K562 (cell line): ENCODE measurements at regions of chr11 and their contacts with region 1.

Region 1: DNA sequence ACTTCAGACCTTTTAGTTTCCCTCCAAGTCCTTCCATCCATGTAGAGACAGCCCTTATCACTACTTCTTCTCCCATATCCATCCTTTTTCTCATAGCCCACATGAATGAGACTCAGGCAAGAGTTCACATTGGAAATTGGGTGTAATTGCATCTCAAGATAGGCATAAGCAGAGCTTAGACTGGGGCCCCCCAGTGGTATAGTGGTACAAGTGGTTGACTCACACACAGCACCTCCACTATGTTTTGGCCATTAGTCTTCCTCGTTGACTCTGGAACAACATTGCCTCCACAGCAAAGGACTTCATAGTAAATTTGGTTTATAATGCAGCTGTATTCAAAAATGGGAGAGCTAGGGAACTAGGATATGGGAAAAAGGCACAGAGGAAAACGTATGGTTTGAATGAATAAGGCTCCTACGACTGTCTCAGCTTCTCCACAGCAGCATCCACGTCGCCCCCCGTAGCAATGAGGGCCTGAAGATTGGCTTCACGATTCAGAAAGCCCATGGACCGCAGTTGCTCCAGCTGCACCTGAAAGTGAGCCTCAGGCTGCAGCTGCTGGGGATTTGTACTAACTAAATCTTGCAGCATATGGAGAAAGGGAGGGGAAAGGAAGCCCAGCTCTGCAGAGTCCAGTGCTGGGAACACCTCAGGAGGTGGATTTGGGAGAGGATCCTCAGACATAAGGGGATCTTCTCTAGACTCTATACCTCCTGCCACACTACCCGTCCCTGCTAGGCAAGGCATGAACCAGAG is 2.4 kb downstream of the UBQLN3 start:
- DNase-seq: peak; percentile 36 to 62 (median 48)
- ATAC-seq: peak; percentile 48
- H3K4me3 ChIP-seq: no peak overlapping the region
- H3K27ac ChIP-seq: no peak overlapping the region
- H3K4me1 ChIP-seq: peaks cover 24 to 49% of the 10 kb centered on the region in 2 experiments; a peak in 4 of 5 replicates
- H3K27me3 ChIP-seq: no peaks in the 10 kb centered on the region
- CTCF ChIP-seq: peak; percentile 52 to 62 (median 59); a peak in 5 of 6 replicates
- EP300 ChIP-seq: no peak
- POLR2A ChIP-seq: no peak
- RAD21 ChIP-seq: peak in 1 of 2 experiments; percentile 24; a peak in 1 of 4 replicates

Region 2: GRCh38 chr11:5476184-5476819 is 31.1 kb before region 1 on chr11:
- CTCF ChIA-PET with region 1: no interaction called
- POLR2A ChIA-PET with region 1: interaction called, 17 read pairs
- in situ Hi-C with region 1: no loop called
- intact Hi-C with region 1: no loop called
- DNase-seq: peak; percentile 69 to 77 (median 72)
- ATAC-seq: peak; percentile 97
- H3K4me3 ChIP-seq: no peak overlapping the region
- H3K27ac ChIP-seq: no peak overlapping the region; the same call in 2 of the 3 replicates
- H3K4me1 ChIP-seq: no peaks in the 10 kb centered on the region
- H3K27me3 ChIP-seq: no peaks in the 10 kb centered on the region
- CTCF ChIP-seq: peak; percentile 65 to 82 (median 79)
- EP300 ChIP-seq: no peak
- POLR2A ChIP-seq: no peak
- RAD21 ChIP-seq: peak; percentile 63 to 79

Region 3: GRCh38 chr11:5522308-5522707 is 15.0 kb after region 1 on chr11:
- CTCF ChIA-PET with region 1: no interaction called
- POLR2A ChIA-PET with region 1: interaction called, 123 read pairs
- in situ Hi-C with region 1: no loop called
- intact Hi-C with region 1: no loop called
- DNase-seq: no peak
- ATAC-seq: 0 out of 3 replicates have a peak, but pooled peaks have one; percentile 27
- H3K4me3 ChIP-seq: no peak overlapping the region
- H3K27ac ChIP-seq: no peak overlapping the region
- H3K4me1 ChIP-seq: no peaks in the 10 kb centered on the region; a peak in 1 of 5 replicates
- H3K27me3 ChIP-seq: peaks cover 0 to 2% of the 10 kb centered on the region in 2 experiments; a peak in 1 of 5 replicates
- CTCF ChIP-seq: no peak
- EP300 ChIP-seq: no peak
- POLR2A ChIP-seq: no peak
- RAD21 ChIP-seq: no peak

Region 4: DNA sequence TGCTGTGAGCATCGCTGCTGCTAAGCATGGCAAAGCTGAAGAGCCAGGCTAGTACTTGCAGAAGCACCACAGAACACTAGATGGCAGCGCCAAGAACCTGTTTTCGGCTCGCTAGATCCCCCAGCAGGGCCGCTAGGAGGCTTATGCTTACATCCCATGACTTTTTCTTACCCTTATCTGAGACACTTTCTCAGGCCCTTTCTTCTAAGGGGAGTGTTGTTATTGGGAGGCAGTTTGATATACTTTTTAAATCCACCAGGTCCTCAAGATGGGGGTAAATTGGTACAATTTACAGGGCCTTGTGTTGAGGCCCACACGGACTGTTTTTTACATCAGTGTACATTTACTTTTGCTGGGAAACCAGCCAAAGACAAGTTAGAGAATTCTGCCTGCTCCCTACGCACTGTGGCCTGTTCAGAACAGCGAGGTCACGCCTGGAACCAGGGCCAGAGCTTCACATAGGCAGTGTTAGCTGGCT is 93.1 kb after region 1 on chr11:
- CTCF ChIA-PET with region 1: no interaction called
- POLR2A ChIA-PET with region 1: interaction called, 18 read pairs
- in situ Hi-C with region 1: no loop called
- intact Hi-C with region 1: loop called (anchors 10 kb)
- DNase-seq: peak; percentile 45 to 91 (median 59)
- ATAC-seq: peak; percentile 85
- H3K4me3 ChIP-seq: no peak overlapping the region
- H3K27ac ChIP-seq: peak overlapping the region; percentile 14; the same call in 2 of the 3 replicates
- H3K4me1 ChIP-seq: peaks cover 13 to 18% of the 10 kb centered on the region in 2 experiments; a peak in 4 of 5 replicates
- H3K27me3 ChIP-seq: no peaks in the 10 kb centered on the region
- CTCF ChIP-seq: peak; percentile 91 to 99 (median 99)
- EP300 ChIP-seq: no peak
- POLR2A ChIP-seq: no peak
- RAD21 ChIP-seq: peak; percentile 65 to 86